ENCODE measurements at regions of chr11 and their contacts with region 1.

Region 1: GRCh38 chr11:130434521-130435223 is 6.3 kb upstream of the ADAMTS8 start:
- DNase-seq: no peak
- H3K4me3 ChIP-seq: peak overlapping the region; percentile 65
- H3K27ac ChIP-seq: peak overlapping the region; percentile 49
- H3K27me3 ChIP-seq: peaks cover 14% of the 10 kb centered on the region
- CTCF ChIP-seq: peak; percentile 90

Region 2: GRCh38 chr11:130213143-130213978 is 221.3 kb before region 1 on chr11:
- CTCF ChIA-PET with region 1: interaction called, 39 read pairs
- POLR2A ChIA-PET with region 1: interaction called, 3 read pairs
- DNase-seq: no peak
- H3K4me3 ChIP-seq: no peak overlapping the region
- H3K27ac ChIP-seq: no peak overlapping the region
- H3K27me3 ChIP-seq: peaks cover 53% of the 10 kb centered on the region
- CTCF ChIP-seq: peak; percentile 88

Region 3: GRCh38 chr11:130448416-130449309 is 14.0 kb after region 1 on chr11 and contains the start of gene ADAMTS15:
- CTCF ChIA-PET with region 1: interaction called, 14 read pairs
- POLR2A ChIA-PET with region 1: no interaction called
- DNase-seq: no peak
- H3K4me3 ChIP-seq: peak within 1 kb of the TSS; percentile 60
- H3K27ac ChIP-seq: peak within 1 kb of the TSS; percentile 31
- H3K27me3 ChIP-seq: no peaks in the 10 kb centered on the region
- CTCF ChIP-seq: no peak
- polyA plus RNA-seq, gene ADAMTS15: 4.7 and 5.8 TPM in 2 replicates

Region 4: GRCh38 chr11:130819625-130820024 is 385.0 kb after region 1 on chr11:
- CTCF ChIA-PET with region 1: interaction called, 10 read pairs
- POLR2A ChIA-PET with region 1: interaction called, 4 read pairs
- DNase-seq: no peak
- H3K4me3 ChIP-seq: no peak overlapping the region
- H3K27ac ChIP-seq: no peak overlapping the region
- H3K27me3 ChIP-seq: peaks cover 10% of the 10 kb centered on the region
- CTCF ChIP-seq: no peak

Region 5: GRCh38 chr11:130839981-130840666 is 405.5 kb after region 1 on chr11:
- CTCF ChIA-PET with region 1: interaction called, 12 read pairs
- POLR2A ChIA-PET with region 1: no interaction called
- DNase-seq: peak; percentile 24
- H3K4me3 ChIP-seq: no peak overlapping the region
- H3K27ac ChIP-seq: no peak overlapping the region
- H3K27me3 ChIP-seq: no peaks in the 10 kb centered on the region
- CTCF ChIP-seq: no peak

Region 6: DNA sequence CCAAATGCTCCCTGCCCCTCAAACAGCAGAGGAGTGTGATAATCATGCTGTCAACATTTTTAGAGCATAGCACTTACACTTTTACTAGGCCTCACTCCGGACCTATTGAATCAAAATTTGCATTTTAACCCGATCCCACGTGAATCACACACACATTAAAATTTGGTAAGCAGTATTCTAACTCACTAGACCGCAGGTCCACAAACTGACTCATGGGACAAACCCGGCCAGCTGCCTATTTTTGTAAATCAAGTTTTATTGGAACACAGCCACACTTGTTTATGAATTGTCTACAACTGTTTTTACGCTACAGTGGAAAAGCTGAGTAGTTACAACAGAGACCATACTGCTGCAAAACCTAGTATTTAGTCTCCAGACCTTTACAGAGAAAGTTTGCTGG is 438.3 kb after region 1 on chr11:
- CTCF ChIA-PET with region 1: interaction called, 16 read pairs
- POLR2A ChIA-PET with region 1: no interaction called
- DNase-seq: peak; percentile 62
- H3K4me3 ChIP-seq: no peak overlapping the region
- H3K27ac ChIP-seq: peak overlapping the region; percentile 87
- H3K27me3 ChIP-seq: no peaks in the 10 kb centered on the region
- CTCF ChIP-seq: no peak

Region 7: GRCh38 chr11:130916238-130916855 is 481.7 kb after region 1 on chr11 and contains the start of gene SNX19:
- CTCF ChIA-PET with region 1: interaction called, 30 read pairs
- POLR2A ChIA-PET with region 1: interaction called, 6 read pairs
- DNase-seq: peak; percentile 63
- H3K4me3 ChIP-seq: peak within 1 kb of the TSS; percentile 80
- H3K27ac ChIP-seq: peak within 1 kb of the TSS; percentile 77
- H3K27me3 ChIP-seq: no peaks in the 10 kb centered on the region
- CTCF ChIP-seq: peak; percentile 80
- polyA plus RNA-seq, gene SNX19: 64.9 and 78.8 TPM in 2 replicates